ENCODE measurements at regions of chr19 and their contacts with region 1.

Region 1: GRCh38 chr19:11380653-11381534 is 3.2 kb downstream of the EPOR start:
- DNase-seq: peak; percentile 96 to 98
- ATAC-seq: peak; percentile 73 to 84
- H3K4me3 ChIP-seq: peak overlapping the region; percentile 51
- H3K27ac ChIP-seq: peak overlapping the region; percentile 76 to 91
- H3K4me1 ChIP-seq: peaks cover 41% of the 10 kb centered on the region
- CTCF ChIP-seq: peak; percentile 51
- EP300 ChIP-seq: no peak
- POLR2A ChIP-seq: peak; percentile 69
- RAD21 ChIP-seq: peak; percentile 42 to 43; a peak in 3 of 5 replicates

Region 2: GRCh38 chr19:11237321-11237720 is 143.6 kb before region 1 on chr19:
- CTCF ChIA-PET with region 1: no interaction called
- POLR2A ChIA-PET with region 1: no interaction called
- DNase-seq: no peak
- ATAC-seq: no peak
- H3K4me3 ChIP-seq: no peak overlapping the region
- H3K27ac ChIP-seq: no peak overlapping the region
- H3K4me1 ChIP-seq: no peaks in the 10 kb centered on the region
- CTCF ChIP-seq: no peak
- EP300 ChIP-seq: no peak
- POLR2A ChIP-seq: no peak
- RAD21 ChIP-seq: no peak

Region 3: GRCh38 chr19:11339254-11340098 is 41.4 kb before region 1 on chr19 and contains the start of gene RAB3D:
- CTCF ChIA-PET with region 1: interaction called, 31 read pairs
- POLR2A ChIA-PET with region 1: interaction called, 13 read pairs
- DNase-seq: peak; percentile 85
- ATAC-seq: peak; percentile 87 to 95
- H3K4me3 ChIP-seq: peak within 1 kb of the TSS; percentile 89
- H3K27ac ChIP-seq: peak within 1 kb of the TSS; percentile 91 to 95
- H3K4me1 ChIP-seq: peaks cover 25% of the 10 kb centered on the region
- CTCF ChIP-seq: no peak
- EP300 ChIP-seq: no peak
- POLR2A ChIP-seq: peak; percentile 43; the same call in 1 of the 2 replicates
- RAD21 ChIP-seq: no peak
- polyA plus RNA-seq, gene RAB3D: 22.3 and 26.8 TPM in 2 replicates

Region 4: GRCh38 chr19:11361037-11361770 is 19.7 kb before region 1 on chr19:
- CTCF ChIA-PET with region 1: interaction called, 10 read pairs
- POLR2A ChIA-PET with region 1: interaction called, 13 read pairs
- DNase-seq: no peak
- ATAC-seq: peak; percentile 33 to 66; a peak in 3 of 6 replicates
- H3K4me3 ChIP-seq: no peak overlapping the region
- H3K27ac ChIP-seq: no peak overlapping the region
- H3K4me1 ChIP-seq: no peaks in the 10 kb centered on the region
- CTCF ChIP-seq: no peak
- EP300 ChIP-seq: no peak
- POLR2A ChIP-seq: no peak
- RAD21 ChIP-seq: no peak

Region 5: DNA sequence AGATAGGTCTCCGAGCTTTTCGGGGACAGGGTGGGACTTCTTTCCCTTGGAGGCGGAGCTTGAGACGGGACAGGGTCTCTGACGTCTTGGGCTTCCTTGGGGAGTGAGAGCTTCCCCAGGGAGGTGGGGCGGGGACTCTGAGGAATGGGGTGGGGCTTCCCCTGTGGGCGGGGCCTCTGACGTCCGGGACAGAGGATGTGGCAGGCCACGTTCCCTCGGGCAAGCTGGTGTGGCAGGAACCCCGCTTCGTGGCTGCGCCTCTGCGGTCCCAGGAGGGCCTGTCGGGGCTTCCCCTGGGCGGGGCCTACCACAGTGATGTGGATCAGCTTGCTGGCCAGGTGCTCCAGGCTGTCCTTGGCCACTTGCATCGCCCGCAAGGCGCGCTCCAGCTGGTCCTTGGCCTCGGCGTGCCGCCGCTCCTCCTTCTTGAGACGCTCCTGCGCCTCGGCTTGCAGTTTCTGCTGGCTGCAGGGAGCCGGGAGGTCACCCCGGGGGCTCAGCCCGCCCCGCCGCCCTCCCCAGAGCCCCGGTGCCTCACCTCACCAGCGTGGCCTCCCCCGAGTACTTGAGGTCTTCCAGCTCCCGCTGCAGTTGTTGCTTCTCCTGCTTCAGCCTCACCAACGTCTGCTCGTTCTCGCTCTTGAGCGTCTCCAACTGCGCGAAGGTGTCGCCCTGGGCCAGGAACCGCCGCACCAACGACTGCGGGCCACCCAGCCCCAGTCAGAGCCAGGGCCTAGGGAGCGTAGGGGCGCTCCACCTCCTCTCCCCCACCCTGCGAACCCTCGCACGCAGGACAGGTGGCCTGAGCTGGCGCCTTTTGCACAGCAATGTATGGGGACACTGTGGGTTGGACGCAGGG is 41.5 kb after region 1 on chr19:
- CTCF ChIA-PET with region 1: interaction called, 40 read pairs
- POLR2A ChIA-PET with region 1: interaction called, 5 read pairs
- DNase-seq: peak; percentile 48 to 60
- ATAC-seq: peak; percentile 51 to 71; a peak in 5 of 6 replicates
- H3K4me3 ChIP-seq: peak overlapping the region; percentile 31; the same call in 2 of the 3 replicates
- H3K27ac ChIP-seq: no peak overlapping the region
- H3K4me1 ChIP-seq: no peaks in the 10 kb centered on the region
- CTCF ChIP-seq: no peak
- EP300 ChIP-seq: no peak
- POLR2A ChIP-seq: no peak
- RAD21 ChIP-seq: no peak

Region 6: GRCh38 chr19:11446652-11447301 is 65.9 kb after region 1 on chr19:
- CTCF ChIA-PET with region 1: interaction called, 29 read pairs
- POLR2A ChIA-PET with region 1: interaction called, 3 read pairs
- DNase-seq: peak; percentile 40 to 70
- ATAC-seq: peak; percentile 83 to 93; a peak in 5 of 6 replicates
- H3K4me3 ChIP-seq: no peak overlapping the region
- H3K27ac ChIP-seq: no peak overlapping the region
- H3K4me1 ChIP-seq: no peaks in the 10 kb centered on the region
- CTCF ChIP-seq: peak; percentile 62
- EP300 ChIP-seq: no peak
- POLR2A ChIP-seq: no peak
- RAD21 ChIP-seq: peak; percentile 76 to 77

Region 7: GRCh38 chr19:11964858-11965645 is 584.2 kb after region 1 on chr19 and contains the start of gene ZNF763:
- CTCF ChIA-PET with region 1: no interaction called
- POLR2A ChIA-PET with region 1: no interaction called
- DNase-seq: no peak
- ATAC-seq: no peak
- H3K4me3 ChIP-seq: no peak within 1 kb of the TSS
- H3K27ac ChIP-seq: no peak within 1 kb of the TSS
- H3K4me1 ChIP-seq: no peaks in the 10 kb centered on the region
- CTCF ChIP-seq: no peak
- EP300 ChIP-seq: no peak
- POLR2A ChIP-seq: no peak
- RAD21 ChIP-seq: no peak
- polyA plus RNA-seq, gene ZNF763: not detected in 2 replicates

Measured in A549 (cell line).